Activated T-helper 2 cell treated with anti-CD3 and anti-CD28 coated beads, Interferon-gamma antibody, Interleukin-2, Interleukin-4, amounts not matched to agents 10 μg/mL and 5 μg/mL and 100 μg/mL, durations not matched to agents 14 hours and 24 hours and 36 hours (primary cell): ENCODE measurements at regions of chr1 and their contacts with region 1.

Region 1: DNA sequence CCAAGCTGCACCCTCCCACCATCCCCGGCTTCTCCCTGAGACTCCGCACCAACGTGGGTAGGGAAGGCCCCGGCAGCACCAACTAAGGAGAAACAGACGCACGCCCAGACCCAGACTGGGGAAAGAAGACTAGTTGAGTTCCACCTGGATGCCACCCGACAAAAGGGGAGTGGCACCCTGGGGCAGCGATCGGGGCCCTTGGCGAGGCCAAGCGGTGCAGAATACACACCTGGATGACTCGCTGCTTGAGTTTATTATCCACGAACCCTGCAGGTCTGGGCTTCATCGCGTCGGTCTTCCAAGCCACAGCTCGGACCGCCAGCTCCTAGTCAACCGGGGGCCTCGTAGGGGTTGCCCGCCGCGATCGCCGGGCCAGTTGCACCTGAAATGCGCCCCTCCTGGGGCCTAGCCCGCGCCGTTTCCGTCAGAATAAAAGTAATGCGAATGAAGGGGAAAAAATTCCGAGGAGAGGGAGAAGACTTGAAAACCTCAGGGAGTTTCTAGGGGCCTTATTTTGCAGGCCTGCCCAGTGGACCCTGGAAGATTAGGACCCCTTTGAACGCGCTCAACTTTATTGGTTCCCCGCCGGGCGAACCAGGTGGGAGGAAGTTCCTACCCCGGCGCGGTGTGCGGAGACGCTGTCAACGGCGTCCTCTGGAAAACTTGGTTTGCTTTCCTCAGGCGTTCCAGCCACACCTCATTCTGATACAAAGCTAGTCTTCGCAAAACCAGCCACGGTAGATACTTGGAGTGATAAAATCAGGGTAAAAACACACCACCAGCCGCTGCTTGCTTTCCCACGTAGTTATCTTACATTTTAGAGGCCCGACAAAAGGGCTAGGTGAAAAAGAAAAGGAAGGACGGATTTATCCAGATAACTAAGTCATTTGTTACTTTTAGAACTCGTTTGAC is at the start of gene NVL:
- DNase-seq: peak; percentile 74
- H3K4me3 Mint-ChIP-seq: peak within 1 kb of the TSS; percentile 97
- H3K27ac Mint-ChIP-seq: peak within 1 kb of the TSS; percentile 98
- H3K4me1 Mint-ChIP-seq: peaks cover 43% of the 10 kb centered on the region
- H3K27me3 Mint-ChIP-seq: no peaks in the 10 kb centered on the region
- total RNA-seq, gene NVL: 38.4 and 39.0 TPM in 2 replicates

Region 2: GRCh38 chr1:223831755-223832636 is 498.1 kb before region 1 on chr1:
- intact Hi-C with region 1: loop called (anchors 5 kb)
- DNase-seq: no peak
- H3K4me3 Mint-ChIP-seq: peak overlapping the region; percentile 54
- H3K27ac Mint-ChIP-seq: peak overlapping the region; percentile 92
- H3K4me1 Mint-ChIP-seq: peaks cover 24% of the 10 kb centered on the region
- H3K27me3 Mint-ChIP-seq: no peaks in the 10 kb centered on the region

Region 3: GRCh38 chr1:224168859-224169380 is 161.2 kb before region 1 on chr1:
- intact Hi-C with region 1: loop called (anchors 5 kb)
- DNase-seq: peak; percentile 37
- H3K4me3 Mint-ChIP-seq: peak overlapping the region; percentile 50
- H3K27ac Mint-ChIP-seq: peak overlapping the region; percentile 83
- H3K4me1 Mint-ChIP-seq: peaks cover 36% of the 10 kb centered on the region
- H3K27me3 Mint-ChIP-seq: peaks cover 7% of the 10 kb centered on the region

Region 4: DNA sequence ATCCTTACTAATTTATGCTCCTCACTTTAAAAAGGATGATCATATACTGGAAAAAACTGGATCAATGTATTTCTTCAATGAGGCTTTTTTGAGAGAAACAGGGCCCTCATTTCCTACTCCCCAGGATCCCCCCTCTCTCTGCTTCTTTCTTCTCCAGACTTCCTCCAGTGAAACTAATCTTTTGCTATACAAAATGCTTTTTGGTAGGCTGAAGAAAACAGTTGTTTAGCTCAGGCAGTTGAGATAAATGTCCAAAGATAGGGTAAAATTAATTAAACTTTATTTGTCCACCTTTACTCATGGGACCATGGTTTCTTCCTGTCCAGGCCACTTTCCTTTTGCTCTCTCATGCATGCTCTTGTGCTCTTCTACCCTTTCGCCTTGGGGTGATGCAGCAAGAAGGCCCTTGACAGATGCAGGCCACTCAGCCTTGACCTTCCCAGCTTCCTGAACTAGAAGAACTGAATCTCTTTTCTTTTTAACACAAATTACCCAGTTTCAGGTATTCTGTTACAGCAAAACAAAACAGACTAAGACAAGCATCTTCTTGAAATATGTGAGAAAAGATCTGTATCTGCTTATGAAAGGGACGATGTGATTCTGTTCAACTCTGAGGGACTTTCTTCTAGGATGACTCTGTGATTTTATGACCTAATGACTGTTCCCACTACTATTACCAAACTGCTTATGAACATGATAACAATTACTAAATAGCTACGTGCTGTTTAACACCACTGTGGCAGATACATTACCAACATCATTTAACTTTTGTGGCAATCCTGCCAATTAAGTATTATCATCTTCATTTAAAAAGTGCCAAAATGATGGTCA is 63.8 kb before region 1 on chr1:
- intact Hi-C with region 1: loop called (anchors 5 kb)
- DNase-seq: no peak
- H3K4me3 Mint-ChIP-seq: peak overlapping the region; percentile 3
- H3K27ac Mint-ChIP-seq: peak overlapping the region; percentile 82
- H3K4me1 Mint-ChIP-seq: peaks cover 38% of the 10 kb centered on the region
- H3K27me3 Mint-ChIP-seq: no peaks in the 10 kb centered on the region

Region 5: DNA sequence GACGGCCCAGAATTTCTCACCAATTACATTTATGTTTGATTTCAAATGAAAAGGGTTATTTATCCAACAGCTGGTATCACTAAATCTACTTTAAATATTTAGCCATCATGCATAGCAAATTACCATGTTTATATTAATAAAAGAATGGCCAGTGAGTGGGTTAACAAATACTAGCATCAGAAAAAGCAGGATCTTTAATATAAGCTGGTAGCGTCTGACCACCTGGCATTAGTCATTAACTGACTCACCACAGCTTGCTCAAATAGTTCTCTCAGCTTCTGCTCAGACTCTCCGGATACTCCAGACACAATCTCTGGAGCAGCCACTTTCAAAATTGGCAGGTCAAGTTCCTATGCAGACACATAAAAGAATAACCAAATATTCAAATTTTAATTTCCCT is 29.8 kb before region 1 on chr1:
- intact Hi-C with region 1: no loop called
- DNase-seq: no peak
- H3K4me3 Mint-ChIP-seq: no peak overlapping the region
- H3K27ac Mint-ChIP-seq: no peak overlapping the region
- H3K4me1 Mint-ChIP-seq: peaks cover 3% of the 10 kb centered on the region
- H3K27me3 Mint-ChIP-seq: no peaks in the 10 kb centered on the region

Region 6: GRCh38 chr1:224317383-224318024 is 12.6 kb before region 1 on chr1:
- intact Hi-C with region 1: no loop called
- DNase-seq: no peak
- H3K4me3 Mint-ChIP-seq: no peak overlapping the region
- H3K27ac Mint-ChIP-seq: no peak overlapping the region
- H3K4me1 Mint-ChIP-seq: peaks cover 16% of the 10 kb centered on the region
- H3K27me3 Mint-ChIP-seq: no peaks in the 10 kb centered on the region

Region 7: DNA sequence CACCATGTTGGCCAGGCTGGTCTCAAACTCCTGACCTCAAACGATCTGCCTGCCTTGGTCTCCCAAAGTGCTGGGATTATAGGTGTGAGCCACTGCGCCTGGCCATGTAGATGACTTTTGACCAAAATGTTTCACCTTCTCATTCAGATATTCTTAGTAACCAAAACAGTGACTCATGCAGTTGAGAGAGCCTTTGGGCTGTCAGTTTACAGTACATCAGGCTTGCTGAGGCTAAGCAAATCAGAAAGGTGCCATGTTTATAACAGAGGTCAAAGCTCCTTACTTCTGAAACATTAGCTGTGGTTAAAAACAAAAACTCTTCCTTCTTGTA is 47.5 kb after region 1 on chr1:
- intact Hi-C with region 1: loop called (anchors 1 kb)
- DNase-seq: no peak
- H3K4me3 Mint-ChIP-seq: peak overlapping the region; percentile 41
- H3K27ac Mint-ChIP-seq: peak overlapping the region; percentile 87
- H3K4me1 Mint-ChIP-seq: peaks cover 90% of the 10 kb centered on the region
- H3K27me3 Mint-ChIP-seq: no peaks in the 10 kb centered on the region

Region 8: GRCh38 chr1:224497714-224498573 is 167.8 kb after region 1 on chr1:
- intact Hi-C with region 1: loop called (anchors 5 kb)
- DNase-seq: peak; percentile 68
- H3K4me3 Mint-ChIP-seq: peak overlapping the region; percentile 60
- H3K27ac Mint-ChIP-seq: peak overlapping the region; percentile 96
- H3K4me1 Mint-ChIP-seq: peaks cover 52% of the 10 kb centered on the region
- H3K27me3 Mint-ChIP-seq: no peaks in the 10 kb centered on the region